ENCODE measurements at regions of chr15 and their contacts with region 1.

Region 1: DNA sequence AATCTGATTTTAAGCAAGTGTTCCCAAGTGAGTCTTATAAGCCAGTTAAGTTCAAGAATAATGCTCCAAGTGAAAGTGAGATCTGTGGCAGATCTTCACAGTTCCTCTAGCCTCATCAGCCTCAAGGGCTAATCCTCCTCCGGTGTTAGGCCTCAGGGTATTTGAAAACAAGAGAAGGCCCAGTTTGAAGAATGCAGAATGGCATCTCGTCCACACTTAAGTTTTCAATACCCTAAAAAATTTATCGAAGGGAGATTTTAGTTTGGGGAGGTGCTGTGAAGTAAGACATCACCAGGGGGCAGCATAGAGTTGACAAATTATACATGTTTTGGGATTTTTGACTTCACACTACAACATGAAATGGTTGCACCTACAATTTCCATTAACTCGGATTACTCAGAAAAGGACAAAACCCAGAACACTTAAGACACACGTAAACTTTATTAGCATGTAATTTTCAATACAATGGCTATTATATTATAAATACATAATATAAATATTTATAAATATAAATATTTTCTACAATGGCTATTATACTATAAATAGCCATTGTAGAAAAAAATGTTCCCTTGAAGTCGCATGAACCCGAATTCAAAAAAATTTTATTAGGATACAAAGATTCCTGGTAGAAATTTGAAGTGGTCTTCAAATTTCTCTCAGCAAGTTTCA is 2.3 kb upstream of the TMEM266 start:
- DNase-seq: peak in 23 of 42 donors; percentile 8 to 77 (median 46)

Region 2: DNA sequence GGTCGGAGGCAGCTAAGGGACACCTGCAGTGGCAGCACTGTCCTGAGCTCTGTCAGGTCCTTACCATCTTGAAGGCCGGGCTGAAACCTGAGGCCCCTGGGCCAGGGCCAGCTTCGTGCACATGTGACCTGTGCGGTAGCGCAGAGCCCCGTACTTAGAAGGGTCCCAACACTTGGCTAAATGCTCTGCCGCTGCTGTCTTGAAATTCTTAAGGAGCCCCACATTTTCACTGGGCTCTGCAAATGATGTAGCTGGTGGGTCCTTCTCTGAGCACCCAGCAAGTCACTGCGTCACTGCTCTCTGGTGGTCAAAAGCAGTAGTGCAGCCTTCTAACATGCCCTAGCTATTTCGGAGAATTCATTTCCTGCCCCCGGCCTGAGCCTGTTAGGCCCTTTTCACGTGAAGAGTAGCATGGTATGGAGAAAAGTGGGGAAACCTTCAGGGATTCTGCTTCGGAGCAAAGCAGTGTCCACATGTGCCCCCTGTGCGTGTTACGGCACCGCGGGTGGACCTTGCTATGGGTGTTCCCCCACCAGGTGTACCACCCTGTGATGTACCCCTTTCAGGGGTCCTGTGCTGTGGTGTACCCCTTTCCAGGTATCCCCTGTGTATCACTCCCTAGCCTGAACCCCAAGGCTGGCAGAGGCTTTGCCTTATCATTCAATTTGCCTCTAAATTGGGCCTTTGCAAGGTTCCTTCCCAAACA is 82.1 kb after region 1 on chr15:
- intact Hi-C with region 1: loop called (anchors 5 kb)
- DNase-seq: peak; percentile 16 to 88 (median 73)

Region 3: DNA sequence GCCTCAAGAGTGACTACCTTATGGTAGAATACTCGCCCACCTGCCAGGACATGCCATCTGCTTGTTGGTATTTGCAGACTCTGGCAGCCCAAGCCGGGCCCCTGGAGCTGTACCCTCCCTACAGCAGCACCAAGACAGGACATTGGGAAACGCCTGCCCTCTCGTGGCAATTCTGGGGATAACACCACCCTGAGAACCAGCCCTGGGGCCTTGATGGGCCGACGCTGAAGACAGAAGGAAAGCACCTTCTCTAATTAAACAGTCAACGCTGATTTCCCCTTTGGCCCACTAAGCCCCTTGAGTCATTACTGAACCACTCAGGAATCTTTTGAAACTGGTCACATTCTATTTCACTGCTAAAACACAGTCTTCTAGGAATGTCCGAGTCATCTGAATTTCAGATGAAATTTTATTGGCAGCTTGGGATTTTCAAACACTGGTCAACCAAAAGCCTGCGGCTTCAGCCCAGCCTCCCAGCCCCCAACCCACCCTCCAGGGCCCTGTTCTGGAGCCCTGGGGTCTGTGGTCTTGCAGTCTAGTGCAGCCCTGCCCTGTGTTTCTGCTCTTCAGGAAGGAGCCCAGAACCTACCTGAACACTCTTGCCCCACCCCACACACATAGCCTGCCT is 93.6 kb after region 1 on chr15:
- intact Hi-C with region 1: loop called (anchors 5 kb)
- DNase-seq: peak; percentile 42 to 88 (median 71)